Tibial artery (tissue), 4 donors: ENCODE measurements at regions of chr1 and their contacts with region 1.

Region 1: DNA sequence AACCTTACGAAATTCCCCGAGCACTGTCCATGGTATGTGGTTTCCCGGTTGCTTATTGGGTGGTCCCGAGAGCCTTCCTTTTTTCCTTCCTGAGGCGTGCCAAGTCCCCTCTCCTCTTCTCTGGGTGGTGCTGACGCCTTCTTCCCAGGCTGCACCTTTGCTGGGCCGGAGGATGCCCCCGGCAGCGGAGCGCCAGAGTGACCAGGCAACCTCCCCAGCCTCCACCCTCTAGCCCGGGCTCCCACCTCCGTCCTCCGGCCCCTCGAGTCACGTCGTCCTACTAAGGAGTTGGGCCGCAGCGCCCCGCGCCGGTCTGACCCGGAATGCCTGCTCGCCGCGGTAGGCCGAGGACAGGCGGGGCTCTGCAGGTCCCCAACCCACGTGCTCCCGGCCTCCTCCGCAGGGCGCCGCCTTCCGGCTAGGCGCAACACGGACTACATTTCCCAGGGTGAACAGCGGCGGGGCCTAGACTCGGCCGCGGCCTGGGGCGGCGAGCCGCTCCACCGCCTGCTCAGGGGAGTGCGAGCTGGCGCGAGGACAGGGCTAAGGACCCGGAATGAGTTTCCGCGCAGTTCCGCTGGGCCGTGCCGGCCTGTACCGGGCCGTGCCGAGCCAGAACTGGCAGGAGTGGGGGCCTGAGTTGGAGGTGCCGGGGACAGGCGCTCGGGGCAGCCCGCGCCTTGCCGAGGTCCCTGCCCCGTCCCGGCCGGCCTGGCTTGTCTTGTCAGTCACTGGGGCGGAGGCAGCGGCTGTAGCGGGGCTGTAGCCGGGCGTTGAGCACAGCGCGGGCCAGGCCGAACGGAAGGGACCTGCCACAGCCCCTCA is at the start of gene IPO13:
- DNase-seq: peak; percentile 93 to 97
- H3K4me3 ChIP-seq: peak within 1 kb of the TSS; percentile 73 to 74
- H3K27ac ChIP-seq: peak within 1 kb of the TSS; percentile 89 to 94
- H3K4me1 ChIP-seq: peaks cover 0 to 42% (median 29%) of the 10 kb centered on the region in 4 donors
- H3K27me3 ChIP-seq: no peaks in the 10 kb centered on the region
- CTCF ChIP-seq: peak; percentile 53 to 72

Region 2: GRCh38 chr1:43974443-43975248 is 28.2 kb after region 1 on chr1 and contains the start of gene ATP6V0B:
- intact Hi-C with region 1: loop called (anchors 2 kb)
- DNase-seq: peak; percentile 97
- H3K4me3 ChIP-seq: peak within 1 kb of the TSS; percentile 94 to 98
- H3K27ac ChIP-seq: peak within 1 kb of the TSS; percentile 83 to 94
- H3K4me1 ChIP-seq: peaks cover 0 to 58% (median 45%) of the 10 kb centered on the region in 4 donors
- H3K27me3 ChIP-seq: no peaks in the 10 kb centered on the region
- CTCF ChIP-seq: peak; percentile 29 to 49

Region 3: DNA sequence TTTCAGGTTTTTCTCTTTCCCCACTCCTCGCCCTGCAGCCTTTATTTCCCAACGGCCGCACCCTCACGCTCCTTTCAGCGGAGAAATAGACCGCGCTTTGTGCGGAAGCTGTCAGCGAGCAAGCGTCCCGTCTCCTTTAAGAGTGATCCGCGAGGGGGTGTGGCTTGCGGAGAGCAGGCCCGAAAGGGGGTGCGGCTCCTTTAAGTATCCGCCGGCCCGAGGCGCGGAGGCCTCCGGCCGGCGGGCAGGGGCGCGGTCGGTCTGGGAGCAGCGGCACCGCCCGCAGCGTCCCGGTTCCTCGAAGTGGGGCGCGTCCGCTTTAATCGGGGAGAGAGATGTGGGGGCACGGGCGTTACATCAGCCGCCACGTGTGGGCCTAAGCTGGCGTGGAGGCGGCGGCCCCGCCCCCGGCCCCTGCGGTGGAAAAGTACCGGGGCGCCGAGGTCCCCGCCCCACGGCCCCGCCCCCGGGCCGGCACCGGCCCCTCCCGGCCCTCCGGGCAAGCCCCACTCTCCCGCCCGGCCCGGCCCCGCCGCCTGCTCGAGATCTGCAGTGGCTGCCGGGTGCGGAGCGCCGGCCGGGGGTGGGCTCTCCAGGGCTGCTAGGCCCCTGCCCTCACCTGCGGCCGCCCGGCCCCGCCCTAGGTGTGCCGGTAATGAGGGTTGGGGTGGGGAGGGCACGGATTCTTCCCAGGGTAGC is 83.6 kb after region 1 on chr1:
- intact Hi-C with region 1: loop called (anchors 10 kb)
- DNase-seq: peak; percentile 91 to 92
- H3K4me3 ChIP-seq: peak overlapping the region; percentile 73 to 81
- H3K27ac ChIP-seq: peak overlapping the region; percentile 91 to 95
- H3K4me1 ChIP-seq: peaks cover 0 to 30% (median 14%) of the 10 kb centered on the region in 4 donors
- H3K27me3 ChIP-seq: no peaks in the 10 kb centered on the region
- CTCF ChIP-seq: peak in 1 of 2 experiments; percentile 3